Dendritic cell treated with granulocyte-macrophage colony-stimulating factor and Interleukin-4, amounts not matched to agents 40 ng/mL and 50 ng/mL, for 4 days (primary cell): ENCODE measurements at regions of chr11 and their contacts with region 1.

Region 1: DNA sequence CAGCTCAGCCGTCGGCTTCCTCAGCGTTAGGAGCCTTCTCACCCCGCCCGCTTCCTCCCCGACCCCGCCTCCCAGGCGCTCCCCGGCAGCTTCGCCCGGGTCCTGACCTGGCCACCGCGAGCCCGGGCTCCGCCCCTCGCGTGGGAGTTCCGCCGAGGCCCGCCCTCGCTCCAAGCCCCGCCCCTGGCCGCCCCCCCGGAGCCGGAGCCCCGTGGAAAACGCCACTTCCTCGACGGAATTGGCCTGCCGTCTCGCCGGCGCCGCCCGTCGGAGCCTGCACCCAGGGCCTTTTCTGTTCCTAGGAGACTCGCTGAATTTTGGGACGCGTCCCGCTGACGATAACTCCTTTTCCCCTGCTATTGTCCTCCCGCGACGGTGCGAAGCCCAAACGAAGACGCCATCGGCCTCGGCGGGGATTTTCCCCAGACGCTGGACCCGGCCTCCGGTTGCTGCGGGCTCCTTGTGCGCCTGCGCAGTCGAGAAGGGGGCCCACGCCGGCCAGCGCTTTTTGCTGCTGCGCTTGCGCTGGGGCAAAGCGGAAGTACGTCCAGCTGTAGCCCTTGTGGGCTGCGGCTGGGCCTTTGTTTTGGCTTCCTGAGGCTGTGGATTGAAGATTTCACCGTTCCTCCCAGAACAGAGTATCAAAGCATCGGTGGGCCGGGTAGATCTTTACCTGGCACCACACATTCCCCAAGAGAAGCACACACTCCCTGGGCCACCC is 10.0 kb downstream of the RELA start:
- H3K4me3 Mint-ChIP-seq: peak overlapping the region; percentile 81
- H3K27ac Mint-ChIP-seq: peak overlapping the region; percentile 96
- H3K4me1 Mint-ChIP-seq: peaks cover 91% of the 10 kb centered on the region
- H3K27me3 Mint-ChIP-seq: no peaks in the 10 kb centered on the region

Region 2: DNA sequence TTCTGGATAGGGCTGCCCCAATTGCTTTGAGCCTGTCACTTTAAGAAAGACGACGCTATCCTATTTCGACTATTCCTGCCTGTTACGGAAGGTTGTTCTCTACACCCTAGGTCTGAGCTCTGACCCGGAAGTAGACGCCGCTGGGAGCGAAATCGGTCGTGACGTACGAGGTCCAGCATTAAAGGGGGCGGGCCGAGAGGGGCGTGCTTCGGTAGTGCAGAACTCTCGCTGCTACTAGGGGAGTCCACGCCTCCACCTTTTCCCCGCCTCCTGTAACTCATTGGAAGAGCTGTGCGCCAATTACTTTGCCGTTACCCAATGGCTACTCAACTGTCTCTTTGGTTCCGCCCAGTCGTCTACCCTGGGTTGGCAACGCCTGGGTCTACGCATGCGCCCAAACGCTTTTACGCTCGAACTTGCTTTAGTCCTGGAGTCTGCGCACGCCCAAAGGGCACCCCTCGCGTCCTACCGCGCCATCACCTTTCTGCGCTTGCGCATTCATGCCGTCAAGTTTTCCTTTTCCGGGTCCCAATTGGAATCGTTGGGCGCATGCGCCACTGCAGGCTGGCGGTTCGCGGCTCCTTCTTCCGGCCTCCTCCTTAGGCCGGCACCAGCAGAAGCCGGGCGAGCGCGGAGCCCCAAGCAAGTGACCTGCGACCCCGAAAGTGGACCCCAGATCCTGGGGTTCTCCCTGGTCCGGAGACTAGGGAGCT is 37.3 kb before region 1 on chr11 and contains the start of gene PCNX3:
- intact Hi-C with region 1: loop called (anchors 2 kb)
- H3K4me3 Mint-ChIP-seq: peak within 1 kb of the TSS; percentile 91
- H3K27ac Mint-ChIP-seq: peak within 1 kb of the TSS; percentile 95
- H3K4me1 Mint-ChIP-seq: peaks cover 54% of the 10 kb centered on the region
- H3K27me3 Mint-ChIP-seq: no peaks in the 10 kb centered on the region

Region 3: DNA sequence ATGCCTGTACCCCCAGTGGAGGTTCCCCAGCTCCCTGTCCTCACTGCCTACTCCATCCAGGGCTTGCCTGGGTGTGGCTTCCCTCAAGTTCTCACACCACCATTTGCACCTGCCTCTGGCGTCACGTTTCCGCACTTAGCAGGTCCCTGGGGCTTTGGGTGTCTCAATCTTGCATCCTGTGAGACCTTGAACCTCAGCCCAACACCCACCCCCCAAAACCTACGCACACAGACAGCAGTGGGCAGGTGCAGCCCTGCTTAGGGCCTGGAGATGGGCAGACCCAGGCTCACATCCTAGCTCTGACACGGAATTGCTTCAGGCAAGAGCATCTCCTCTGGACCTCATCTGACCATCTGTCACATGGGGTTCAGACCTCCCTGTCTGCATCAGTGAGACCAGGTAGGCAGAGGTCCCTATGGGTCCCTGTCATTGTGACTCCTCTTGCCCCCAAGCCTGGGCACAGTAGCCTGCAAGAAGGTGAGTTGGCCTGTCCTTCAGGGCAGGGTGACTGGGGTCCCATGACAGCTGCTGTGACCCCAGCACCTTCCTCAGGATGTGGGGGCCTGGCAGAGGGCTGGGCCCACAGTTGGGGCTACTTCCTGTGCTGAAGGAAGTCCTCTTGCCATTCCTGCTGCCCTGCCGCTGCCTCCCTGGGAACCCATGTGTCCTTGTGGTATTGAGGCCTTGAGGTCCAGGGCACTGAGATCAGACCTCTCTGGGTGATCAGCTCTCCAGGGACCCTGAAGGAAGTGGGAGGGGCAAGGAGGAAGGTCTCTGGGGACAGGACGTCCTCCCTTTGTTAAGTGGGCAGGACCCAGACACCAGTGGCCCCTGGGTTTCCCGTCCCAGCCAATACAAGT is 12.8 kb before region 1 on chr11:
- intact Hi-C with region 1: loop called (anchors 1 kb)
- H3K4me3 Mint-ChIP-seq: peak overlapping the region; percentile 98
- H3K27ac Mint-ChIP-seq: peak overlapping the region; percentile 94
- H3K4me1 Mint-ChIP-seq: peaks cover 70% of the 10 kb centered on the region
- H3K27me3 Mint-ChIP-seq: no peaks in the 10 kb centered on the region

Region 4: DNA sequence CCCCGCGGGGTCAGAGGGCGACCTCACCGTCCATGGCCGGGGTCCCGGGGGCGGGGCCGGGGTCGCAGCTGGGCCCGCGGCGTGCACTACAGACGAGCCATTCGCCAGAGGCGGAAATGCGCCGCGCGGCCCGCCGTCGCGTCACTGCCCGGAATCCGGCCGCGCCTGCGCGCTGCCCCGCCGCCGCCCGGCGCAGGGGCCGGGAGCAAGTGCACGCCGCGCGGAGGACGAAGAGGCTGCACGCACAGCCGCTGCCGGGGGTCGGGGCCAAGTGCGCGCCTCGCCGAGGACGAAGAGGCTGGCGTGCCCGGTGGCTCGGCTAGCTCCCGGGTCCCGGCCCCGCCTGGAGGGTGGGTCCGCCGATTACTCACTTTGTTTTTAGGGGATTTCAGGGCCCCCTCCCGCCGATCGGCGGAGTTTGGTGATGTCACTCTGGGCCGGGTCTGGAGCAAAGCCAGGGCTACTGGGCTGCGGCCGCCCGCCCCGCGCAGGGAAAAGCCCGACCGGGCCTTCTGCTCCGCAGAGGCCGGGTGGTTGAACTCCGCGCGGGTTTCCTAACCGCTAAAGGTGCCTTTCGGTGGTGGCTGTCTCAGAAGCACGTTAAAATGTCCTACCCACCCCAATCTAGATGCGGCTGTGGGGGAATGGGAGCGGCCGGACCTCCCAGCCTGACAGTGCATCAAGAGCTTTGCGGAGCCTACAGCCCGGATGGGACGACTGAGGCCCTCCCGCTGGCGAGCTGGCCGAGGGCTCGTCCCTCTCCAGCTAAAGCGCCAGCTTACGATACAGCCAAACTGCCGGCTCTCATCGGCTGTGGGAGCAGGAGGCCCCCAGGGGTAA is 10.3 kb after region 1 on chr11 and contains the start of gene RELA:
- intact Hi-C with region 1: loop called (anchors 1 kb)
- H3K4me3 Mint-ChIP-seq: peak within 1 kb of the TSS; percentile 82
- H3K27ac Mint-ChIP-seq: peak within 1 kb of the TSS; percentile 95
- H3K4me1 Mint-ChIP-seq: peaks cover 27% of the 10 kb centered on the region
- H3K27me3 Mint-ChIP-seq: no peaks in the 10 kb centered on the region